Left colon (tissue), 2 donors: ENCODE measurements at regions of chr6 and their contacts with region 1.

Region 1: GRCh38 chr6:156686995-156687788 is 90.0 kb upstream of the ARID1B start:
- DNase-seq: peak; percentile 89
- ATAC-seq: peak; percentile 88

Region 2: GRCh38 chr6:156617376-156617775 is 69.8 kb before region 1 on chr6:
- intact Hi-C with region 1: no loop called
- DNase-seq: peak; percentile 63 to 80
- ATAC-seq: peak; percentile 97

Region 3: GRCh38 chr6:156776840-156777576 is 89.8 kb after region 1 on chr6 and contains the start of gene ARID1B:
- intact Hi-C with region 1: loop called (anchors 5 to 10 kb)
- DNase-seq: peak; percentile 80 to 87
- ATAC-seq: peak; percentile 60
- total RNA-seq, gene ARID1B: 69.0 to 85.4 TPM